CD4-positive, alpha-beta memory T cell (primary cell): ENCODE measurements at regions of chr13 and their contacts with region 1.

Region 1: DNA sequence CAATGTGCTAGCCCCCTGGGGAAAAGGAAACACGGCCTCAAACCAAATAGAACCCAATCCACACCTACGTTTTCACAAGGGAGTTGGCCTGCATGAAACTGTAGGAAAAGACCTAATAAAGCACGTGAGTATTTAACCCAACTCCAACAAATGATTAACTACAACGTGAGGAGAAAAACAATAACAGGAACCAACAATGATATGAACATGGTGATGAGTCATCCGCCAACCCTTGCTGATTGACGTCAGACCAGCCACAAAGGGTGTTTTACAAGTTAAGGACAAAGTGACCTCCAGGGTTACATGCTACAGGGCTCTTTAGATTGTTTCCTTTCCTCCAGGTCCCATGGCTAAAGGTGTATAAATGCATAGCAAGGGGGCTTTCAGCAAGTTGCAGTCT is 460.5 kb downstream of the COG6 start:
- DNase-seq: peak; percentile 34 to 79 (median 40)
- H3K4me3 ChIP-seq: no peak overlapping the region
- H3K4me3 Mint-ChIP-seq: peak overlapping the region in 3 of 8 donors; percentile 7 to 52 (median 37)
- H3K27ac ChIP-seq: no peak overlapping the region
- H3K27ac Mint-ChIP-seq: peak overlapping the region; percentile 1 to 92 (median 70)
- H3K4me1 ChIP-seq: peaks cover 13% of the 10 kb centered on the region
- H3K4me1 Mint-ChIP-seq: peaks cover 11 to 17% (median 14%) of the 10 kb centered on the region in 4 donors
- H3K27me3 ChIP-seq: no peaks in the 10 kb centered on the region
- H3K27me3 Mint-ChIP-seq: no peaks in the 10 kb centered on the region

Region 2: GRCh38 chr13:38804536-38804935 is 1311.5 kb before region 1 on chr13:
- CTCF ChIA-PET with region 1: no interaction called
- POLR2A ChIA-PET with region 1: no interaction called
- intact Hi-C with region 1: no loop called
- DNase-seq: no peak
- H3K4me3 ChIP-seq: no peak overlapping the region
- H3K4me3 Mint-ChIP-seq: no peak overlapping the region
- H3K27ac ChIP-seq: no peak overlapping the region
- H3K27ac Mint-ChIP-seq: no peak overlapping the region
- H3K4me1 ChIP-seq: no peaks in the 10 kb centered on the region
- H3K4me1 Mint-ChIP-seq: no peaks in the 10 kb centered on the region
- H3K27me3 ChIP-seq: no peaks in the 10 kb centered on the region
- H3K27me3 Mint-ChIP-seq: peaks cover 0 to 3% of the 10 kb centered on the region in 2 donors

Region 3: DNA sequence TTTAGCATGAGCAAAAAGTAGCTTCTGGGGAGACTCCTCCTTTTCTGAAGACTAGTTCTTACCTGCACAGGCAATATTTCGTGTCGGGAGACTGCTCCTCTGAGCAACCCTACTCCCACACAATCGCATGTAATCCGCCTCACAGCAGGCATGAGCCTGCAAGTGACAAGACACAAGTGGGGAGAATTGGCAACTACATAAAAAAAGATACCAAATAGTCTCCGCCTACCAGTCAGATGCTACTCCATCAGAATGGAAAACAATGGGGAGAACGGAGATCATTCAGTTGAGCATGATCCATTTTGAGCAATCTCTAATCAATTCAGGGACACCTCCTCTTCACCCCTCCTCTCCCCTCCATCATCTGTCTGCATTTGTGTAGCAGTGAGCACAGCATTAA is 139.5 kb before region 1 on chr13:
- CTCF ChIA-PET with region 1: no interaction called
- POLR2A ChIA-PET with region 1: no interaction called
- intact Hi-C with region 1: no loop called
- DNase-seq: no peak
- H3K4me3 ChIP-seq: no peak overlapping the region
- H3K4me3 Mint-ChIP-seq: no peak overlapping the region
- H3K27ac ChIP-seq: no peak overlapping the region
- H3K27ac Mint-ChIP-seq: no peak overlapping the region
- H3K4me1 ChIP-seq: no peaks in the 10 kb centered on the region
- H3K4me1 Mint-ChIP-seq: peaks cover 0 to 5% (median 2%) of the 10 kb centered on the region in 4 donors
- H3K27me3 ChIP-seq: no peaks in the 10 kb centered on the region
- H3K27me3 Mint-ChIP-seq: peaks cover 0 to 4% of the 10 kb centered on the region in 2 donors

Region 4: GRCh38 chr13:40082639-40083038 is 33.4 kb before region 1 on chr13:
- CTCF ChIA-PET with region 1: no interaction called
- POLR2A ChIA-PET with region 1: no interaction called
- intact Hi-C with region 1: no loop called
- DNase-seq: no peak
- H3K4me3 ChIP-seq: no peak overlapping the region
- H3K4me3 Mint-ChIP-seq: no peak overlapping the region
- H3K27ac ChIP-seq: no peak overlapping the region
- H3K27ac Mint-ChIP-seq: no peak overlapping the region
- H3K4me1 ChIP-seq: no peaks in the 10 kb centered on the region
- H3K4me1 Mint-ChIP-seq: no peaks in the 10 kb centered on the region
- H3K27me3 ChIP-seq: no peaks in the 10 kb centered on the region
- H3K27me3 Mint-ChIP-seq: no peaks in the 10 kb centered on the region

Region 5: DNA sequence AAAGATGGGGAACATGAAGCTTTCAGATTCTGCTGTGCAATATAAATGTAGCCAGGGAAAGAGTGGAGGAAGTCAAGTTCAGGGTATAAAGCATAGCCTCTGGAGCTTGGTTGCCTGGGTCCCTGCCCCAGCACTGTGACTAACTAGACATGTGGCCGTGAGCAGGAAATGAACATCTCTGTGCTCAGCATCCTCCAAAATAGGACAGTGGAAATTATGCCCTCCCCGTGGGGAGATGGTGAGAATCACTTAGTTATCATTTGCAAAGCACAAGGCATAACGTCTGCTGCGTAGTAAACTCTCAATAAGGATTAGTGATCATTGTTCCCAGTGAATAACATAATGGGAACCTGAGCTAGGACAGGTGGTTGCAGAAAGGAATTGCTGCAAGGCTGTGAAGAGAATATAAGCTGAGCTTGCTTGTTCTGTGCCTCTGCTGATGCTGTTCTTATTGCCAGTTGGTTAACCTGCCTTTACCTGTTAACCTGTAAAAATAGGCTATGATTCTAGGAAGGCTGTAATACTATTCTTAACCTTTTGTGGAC is 19.6 kb before region 1 on chr13:
- CTCF ChIA-PET with region 1: no interaction called
- POLR2A ChIA-PET with region 1: interaction called, 3 read pairs
- intact Hi-C with region 1: loop called (anchors 2 kb)
- DNase-seq: peak; percentile 21 to 55 (median 29)
- H3K4me3 ChIP-seq: no peak overlapping the region
- H3K4me3 Mint-ChIP-seq: peak overlapping the region in 1 of 8 donors; percentile 15
- H3K27ac ChIP-seq: no peak overlapping the region
- H3K27ac Mint-ChIP-seq: peak overlapping the region in 5 of 7 donors; percentile 12 to 65 (median 58)
- H3K4me1 ChIP-seq: peaks cover 13% of the 10 kb centered on the region
- H3K4me1 Mint-ChIP-seq: peaks cover 14 to 26% (median 17%) of the 10 kb centered on the region in 4 donors
- H3K27me3 ChIP-seq: no peaks in the 10 kb centered on the region
- H3K27me3 Mint-ChIP-seq: no peaks in the 10 kb centered on the region

Region 6: DNA sequence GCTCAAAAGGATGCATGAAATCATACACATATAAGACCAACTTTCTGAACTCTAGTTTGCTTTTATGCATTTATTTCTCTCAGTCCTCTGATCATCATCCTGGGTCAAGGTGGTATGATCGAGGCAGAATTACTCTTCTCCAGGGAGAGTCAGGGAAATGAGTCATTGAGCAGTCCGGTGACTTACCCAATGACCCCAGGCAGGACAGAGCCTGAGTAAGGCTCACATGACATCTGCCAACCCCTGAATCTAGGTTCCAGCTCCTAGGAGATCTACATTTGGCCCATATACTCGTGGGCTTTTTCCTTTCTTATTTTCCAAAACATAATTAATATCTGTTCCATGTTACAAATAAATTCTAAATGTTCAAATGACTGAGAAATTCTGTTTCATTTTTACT is 48.1 kb after region 1 on chr13:
- CTCF ChIA-PET with region 1: no interaction called
- POLR2A ChIA-PET with region 1: no interaction called
- intact Hi-C with region 1: no loop called
- DNase-seq: no peak
- H3K4me3 ChIP-seq: no peak overlapping the region
- H3K4me3 Mint-ChIP-seq: no peak overlapping the region
- H3K27ac ChIP-seq: no peak overlapping the region
- H3K27ac Mint-ChIP-seq: no peak overlapping the region
- H3K4me1 ChIP-seq: no peaks in the 10 kb centered on the region
- H3K4me1 Mint-ChIP-seq: peaks cover 4 to 22% (median 13%) of the 10 kb centered on the region in 4 donors
- H3K27me3 ChIP-seq: no peaks in the 10 kb centered on the region
- H3K27me3 Mint-ChIP-seq: no peaks in the 10 kb centered on the region